ENCODE measurements at regions of chr7 and their contacts with region 1.

Region 1: DNA sequence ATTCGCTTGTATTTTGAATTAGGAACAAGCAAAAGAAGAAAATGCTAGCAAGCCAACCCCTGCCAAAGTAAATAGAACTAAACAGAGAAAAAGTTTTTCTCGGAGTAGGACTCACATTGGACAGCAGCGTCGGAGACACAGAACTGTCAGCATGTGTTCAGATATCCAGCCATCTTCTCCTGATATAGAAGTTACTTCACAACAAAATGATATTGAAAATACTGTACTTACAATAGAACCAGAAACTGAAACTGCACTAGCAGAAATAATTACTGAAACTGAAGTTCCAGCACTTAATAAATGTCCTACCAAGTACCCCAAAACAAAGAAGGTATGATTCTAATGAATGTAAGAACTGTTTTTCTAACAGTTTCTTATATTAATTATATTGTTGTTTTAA is 87.9 kb downstream of the KMT2E start:
- DNase-seq: no peak
- ATAC-seq: no peak
- H3K4me3 ChIP-seq: no peak overlapping the region
- H3K27ac ChIP-seq: no peak overlapping the region
- H3K4me1 ChIP-seq: peaks cover 8% of the 10 kb centered on the region
- H3K27me3 ChIP-seq: no peaks in the 10 kb centered on the region
- CTCF ChIP-seq: no peak
- POLR2A ChIP-seq: no peak
- RAD21 ChIP-seq: no peak

Region 2: DNA sequence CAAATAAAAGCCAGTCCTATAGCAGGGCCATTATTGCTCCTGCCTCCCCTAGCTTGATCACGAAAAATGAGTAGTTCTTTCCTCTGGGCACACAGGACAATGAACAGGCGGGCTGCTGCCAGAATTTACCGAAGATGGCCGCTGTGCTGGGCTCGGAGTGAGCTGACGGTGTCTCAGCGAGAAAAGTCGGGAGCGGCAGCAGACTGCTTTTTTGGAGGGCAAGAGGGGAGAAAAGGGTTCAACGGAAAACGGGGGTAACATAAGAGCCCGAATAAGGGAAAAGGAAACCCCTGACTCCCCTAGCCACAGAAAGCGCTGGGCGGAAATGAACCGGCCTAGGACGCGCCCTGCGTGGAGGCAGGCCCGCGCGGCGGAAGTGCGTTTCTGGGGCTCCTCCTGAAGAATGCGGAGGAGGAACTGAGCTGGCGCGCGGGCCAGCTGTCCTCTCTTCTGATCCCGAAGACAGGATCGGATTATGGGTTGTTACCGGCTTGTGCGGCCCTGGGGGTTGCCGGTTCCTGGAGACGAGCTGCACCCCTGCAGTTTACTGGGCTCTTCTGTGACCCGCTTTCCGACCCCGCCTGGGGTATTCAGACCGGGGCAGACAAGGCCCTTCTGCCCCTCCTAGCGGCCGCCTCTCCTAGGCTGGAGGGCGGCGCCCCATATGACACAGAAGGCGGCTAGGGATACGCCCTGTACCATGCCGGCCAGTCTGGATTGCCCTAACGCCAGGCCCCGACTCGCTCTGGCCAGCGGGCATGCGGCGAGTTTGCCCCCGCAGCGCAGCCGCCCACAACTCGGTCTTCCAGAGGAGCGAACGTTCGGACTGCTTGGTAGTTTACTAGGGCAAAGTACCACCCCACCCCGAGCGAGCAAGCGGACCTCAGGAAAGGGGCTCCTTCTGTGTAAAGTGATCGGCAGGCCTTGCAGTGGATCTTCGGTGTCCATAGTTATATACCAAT is 118.0 kb before region 1 on chr7:
- CTCF ChIA-PET with region 1: no interaction called
- POLR2A ChIA-PET with region 1: no interaction called
- dilution Hi-C with region 1: no loop called
- in situ Hi-C with region 1: no loop called
- intact Hi-C with region 1: loop called (anchors 2 kb)
- DNase-seq: peak; percentile 81
- ATAC-seq: peak; percentile 92
- H3K4me3 ChIP-seq: peak overlapping the region; percentile 74
- H3K27ac ChIP-seq: peak overlapping the region; percentile 97
- H3K4me1 ChIP-seq: peaks cover 16% of the 10 kb centered on the region
- H3K27me3 ChIP-seq: no peaks in the 10 kb centered on the region
- CTCF ChIP-seq: peak; percentile 49
- POLR2A ChIP-seq: peak; percentile 93
- RAD21 ChIP-seq: peak; percentile 20; the same call in 1 of the 2 replicates

Measured in IMR-90 (cell line).